ENCODE measurements at regions of chr6 and their contacts with region 1.

Region 1: DNA sequence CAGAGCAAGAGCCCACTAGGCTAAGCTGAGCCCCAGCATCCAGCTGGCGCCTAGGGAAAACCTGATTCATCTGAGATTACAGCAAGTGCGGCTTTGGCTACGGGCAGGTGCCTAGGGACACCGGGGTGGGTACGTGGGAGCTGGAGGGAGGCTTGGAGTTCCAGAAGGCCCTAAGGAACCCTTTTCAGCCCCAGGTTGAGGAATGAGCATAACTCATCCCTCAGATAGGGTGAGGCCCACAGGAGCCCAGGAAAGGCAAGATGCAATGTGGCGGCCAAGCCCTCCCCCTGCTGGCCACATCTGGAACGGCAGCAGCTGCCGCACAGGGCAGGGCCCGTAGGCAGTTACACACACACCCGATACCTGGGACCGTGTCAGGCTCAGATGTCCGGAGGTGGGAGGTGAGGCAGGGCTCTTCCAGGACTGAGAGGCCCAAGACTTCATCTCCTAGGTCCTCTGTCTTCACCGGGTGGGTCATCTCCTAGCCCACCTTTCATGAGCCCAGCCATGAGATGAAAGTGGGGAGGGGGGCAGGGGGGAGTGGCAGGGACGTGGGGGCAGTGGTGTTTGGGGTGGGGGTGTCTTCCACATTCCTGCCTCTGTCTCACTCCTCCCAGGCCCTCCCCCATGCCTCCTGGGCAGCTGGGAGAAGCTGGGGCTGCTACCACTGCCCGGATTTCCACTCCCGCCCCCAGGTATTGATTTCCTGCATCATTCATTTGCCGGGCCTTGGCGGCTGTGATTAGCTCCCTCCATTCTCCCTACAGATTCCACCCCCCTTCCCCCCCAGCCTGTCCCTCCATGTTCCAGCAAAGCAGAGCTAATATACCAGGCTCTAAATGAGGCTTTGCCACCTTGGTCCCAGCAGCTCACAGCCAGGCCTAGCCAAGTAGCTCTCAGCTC is 5.5 kb downstream of the MDGA1 start:
- DNase-seq: peak; percentile 85 to 91 (median 90)
- ATAC-seq: peak; percentile 96
- H3K4me3 ChIP-seq: no peak overlapping the region
- H3K27ac ChIP-seq: no peak overlapping the region
- H3K4me1 ChIP-seq: peaks cover 0 to 19% of the 10 kb centered on the region in 2 experiments; a peak in 3 of 5 replicates
- H3K27me3 ChIP-seq: peaks cover 45 to 89% of the 10 kb centered on the region in 2 experiments
- CTCF ChIP-seq: peak; percentile 96 to 99 (median 98)
- EP300 ChIP-seq: no peak
- POLR2A ChIP-seq: no peak
- RAD21 ChIP-seq: peak; percentile 98 to 99

Region 2: GRCh38 chr6:37029249-37029971 is 662.7 kb before region 1 on chr6:
- CTCF ChIA-PET with region 1: no interaction called
- POLR2A ChIA-PET with region 1: no interaction called
- in situ Hi-C with region 1: no loop called
- intact Hi-C with region 1: loop called (anchors 10 kb)
- DNase-seq: peak; percentile 91 to 97 (median 94)
- ATAC-seq: peak; percentile 99
- H3K4me3 ChIP-seq: no peak overlapping the region
- H3K27ac ChIP-seq: peak overlapping the region; percentile 46
- H3K4me1 ChIP-seq: peaks cover 15 to 63% of the 10 kb centered on the region in 2 experiments
- H3K27me3 ChIP-seq: no peaks in the 10 kb centered on the region
- CTCF ChIP-seq: peak; percentile 96 to 99 (median 97)
- EP300 ChIP-seq: peak; percentile 76
- POLR2A ChIP-seq: no peak
- RAD21 ChIP-seq: peak; percentile 99 to 100

Region 3: GRCh38 chr6:37381579-37381978 is 310.6 kb before region 1 on chr6:
- CTCF ChIA-PET with region 1: interaction called, 7 read pairs
- POLR2A ChIA-PET with region 1: no interaction called
- in situ Hi-C with region 1: no loop called
- intact Hi-C with region 1: loop called (anchors 2 kb)
- DNase-seq: peak; percentile 57 to 81 (median 67)
- ATAC-seq: peak; percentile 92
- H3K4me3 ChIP-seq: no peak overlapping the region
- H3K27ac ChIP-seq: no peak overlapping the region
- H3K4me1 ChIP-seq: no peaks in the 10 kb centered on the region
- H3K27me3 ChIP-seq: no peaks in the 10 kb centered on the region
- CTCF ChIP-seq: peak; percentile 75 to 94 (median 93)
- EP300 ChIP-seq: no peak
- POLR2A ChIP-seq: no peak
- RAD21 ChIP-seq: peak; percentile 81 to 95

Region 4: DNA sequence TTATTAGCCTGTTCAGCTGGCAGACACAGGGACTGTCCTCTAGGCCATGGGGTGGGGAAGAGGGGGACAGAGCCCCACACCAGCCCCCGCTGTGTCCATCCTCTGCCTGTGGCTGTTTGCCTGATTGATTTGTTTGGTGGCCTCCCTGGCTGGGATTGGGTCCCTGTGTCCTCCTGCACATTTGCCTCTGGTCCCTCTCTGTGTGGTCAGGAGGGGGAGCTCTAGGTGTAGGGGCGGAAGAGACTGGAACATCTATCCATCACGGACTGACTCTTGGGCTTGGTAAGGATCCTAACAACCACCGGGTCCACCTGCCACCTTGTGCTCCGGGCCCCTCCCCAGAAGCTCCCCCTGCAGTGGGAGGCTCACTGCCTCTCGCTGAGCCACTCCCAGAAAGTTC is 154.0 kb before region 1 on chr6:
- CTCF ChIA-PET with region 1: interaction called, 5 read pairs
- POLR2A ChIA-PET with region 1: no interaction called
- in situ Hi-C with region 1: no loop called
- intact Hi-C with region 1: loop called (anchors 2 kb)
- DNase-seq: peak; percentile 59 to 77 (median 62)
- ATAC-seq: peak; percentile 90
- H3K4me3 ChIP-seq: no peak overlapping the region
- H3K27ac ChIP-seq: no peak overlapping the region
- H3K4me1 ChIP-seq: peaks cover 2 to 20% of the 10 kb centered on the region in 2 experiments; a peak in 3 of 5 replicates
- H3K27me3 ChIP-seq: peaks cover 55 to 83% of the 10 kb centered on the region in 2 experiments
- CTCF ChIP-seq: peak; percentile 78 to 81 (median 80)
- EP300 ChIP-seq: no peak
- POLR2A ChIP-seq: no peak
- RAD21 ChIP-seq: peak; percentile 60 to 85

Region 5: DNA sequence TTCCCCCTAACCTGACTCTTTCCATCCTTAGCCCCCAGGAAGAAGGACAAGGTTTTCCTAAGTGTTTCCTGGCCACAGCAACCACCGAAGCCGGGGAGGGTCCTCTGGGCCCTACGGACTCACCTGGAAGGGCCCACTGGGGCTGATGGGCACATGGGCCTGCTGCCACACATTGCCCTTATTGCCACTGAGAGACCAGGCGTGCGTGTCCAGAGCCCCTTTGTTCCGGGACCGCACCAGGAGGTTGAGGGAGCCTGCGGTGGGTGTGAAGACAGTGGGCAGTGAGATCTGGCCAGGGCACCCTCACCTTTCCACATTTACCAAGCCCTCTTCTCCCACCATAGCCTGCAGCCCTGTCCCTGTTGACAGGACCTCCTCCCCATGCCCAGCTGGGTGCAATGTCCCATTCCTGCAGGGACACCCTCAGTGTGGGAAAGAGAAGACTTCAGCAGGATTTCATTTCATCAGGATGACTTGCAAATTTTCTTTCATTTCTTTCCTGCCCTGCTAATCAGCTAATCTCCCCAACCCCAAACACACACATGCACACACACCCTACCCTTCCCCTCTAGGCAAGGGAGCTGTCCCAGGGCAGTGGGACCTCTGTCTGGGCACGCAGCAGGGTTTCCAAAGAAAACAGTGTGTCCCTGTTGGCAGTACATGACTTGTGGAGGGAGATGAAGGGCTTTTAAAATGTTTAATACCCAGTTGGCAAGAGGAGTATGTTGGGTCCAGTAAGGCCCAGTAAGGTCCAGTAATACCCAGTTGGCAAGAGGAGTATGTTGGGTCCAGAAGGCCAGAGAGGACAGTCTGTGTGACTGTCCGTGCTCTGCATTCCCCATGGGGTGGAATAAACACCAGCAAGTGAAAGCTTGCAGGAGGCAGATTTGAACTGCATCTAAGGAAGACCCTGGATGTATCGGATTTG is 53.5 kb before region 1 on chr6:
- CTCF ChIA-PET with region 1: interaction called, 3 read pairs
- POLR2A ChIA-PET with region 1: no interaction called
- in situ Hi-C with region 1: no loop called
- intact Hi-C with region 1: loop called (anchors 1 kb)
- DNase-seq: peak in 1 of 4 experiments; percentile 55
- ATAC-seq: peak; percentile 43
- H3K4me3 ChIP-seq: no peak overlapping the region
- H3K27ac ChIP-seq: peak overlapping the region; percentile 37; the same call in 2 of the 3 replicates
- H3K4me1 ChIP-seq: peaks cover 14 to 20% of the 10 kb centered on the region in 2 experiments
- H3K27me3 ChIP-seq: peaks cover 0 to 32% of the 10 kb centered on the region in 2 experiments; a peak in 3 of 5 replicates
- CTCF ChIP-seq: no peak
- EP300 ChIP-seq: peak; percentile 27; the same call in 1 of the 2 replicates
- POLR2A ChIP-seq: no peak
- RAD21 ChIP-seq: no peak

Region 6: DNA sequence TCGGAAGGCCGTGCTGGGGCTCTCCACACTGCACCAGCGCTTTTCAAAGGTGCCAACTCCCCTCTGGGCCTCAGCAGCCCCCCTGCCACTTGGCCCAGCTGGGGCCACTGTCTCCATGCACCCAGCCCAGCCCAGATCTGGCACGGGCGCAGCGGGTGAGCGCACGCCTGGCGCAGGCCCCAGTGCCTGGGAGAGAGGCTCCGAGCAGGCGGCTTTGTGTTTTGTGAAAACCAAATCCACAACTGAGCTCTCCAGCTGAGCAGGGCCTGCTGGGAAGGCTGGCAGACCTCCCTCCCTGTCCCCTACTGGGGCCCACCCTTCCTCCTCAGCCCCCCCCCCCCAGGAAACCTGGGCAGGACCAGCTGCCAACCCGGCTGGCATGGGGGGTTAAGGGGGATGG is 11.5 kb before region 1 on chr6:
- CTCF ChIA-PET with region 1: no interaction called
- POLR2A ChIA-PET with region 1: no interaction called
- in situ Hi-C with region 1: no loop called
- intact Hi-C with region 1: no loop called
- DNase-seq: no peak
- ATAC-seq: no peak
- H3K4me3 ChIP-seq: no peak overlapping the region
- H3K27ac ChIP-seq: no peak overlapping the region
- H3K4me1 ChIP-seq: no peaks in the 10 kb centered on the region
- H3K27me3 ChIP-seq: peaks cover 36 to 84% of the 10 kb centered on the region in 2 experiments
- CTCF ChIP-seq: no peak
- EP300 ChIP-seq: no peak
- POLR2A ChIP-seq: no peak
- RAD21 ChIP-seq: no peak

Measured in K562 (cell line).